ENCODE measurements at regions of chr2 and their contacts with region 1.

Region 1: GRCh38 chr2:155519529-155520130 is 812.9 kb downstream of the NR4A2 start:
- DNase-seq: no peak
- ATAC-seq: no peak
- H3K4me3 ChIP-seq: no peak overlapping the region
- H3K27ac ChIP-seq: no peak overlapping the region
- H3K4me1 ChIP-seq: no peaks in the 10 kb centered on the region
- H3K27me3 ChIP-seq: no peaks in the 10 kb centered on the region; a peak in 1 of 5 replicates
- CTCF ChIP-seq: no peak
- EP300 ChIP-seq: no peak
- POLR2A ChIP-seq: no peak
- RAD21 ChIP-seq: no peak

Region 2: DNA sequence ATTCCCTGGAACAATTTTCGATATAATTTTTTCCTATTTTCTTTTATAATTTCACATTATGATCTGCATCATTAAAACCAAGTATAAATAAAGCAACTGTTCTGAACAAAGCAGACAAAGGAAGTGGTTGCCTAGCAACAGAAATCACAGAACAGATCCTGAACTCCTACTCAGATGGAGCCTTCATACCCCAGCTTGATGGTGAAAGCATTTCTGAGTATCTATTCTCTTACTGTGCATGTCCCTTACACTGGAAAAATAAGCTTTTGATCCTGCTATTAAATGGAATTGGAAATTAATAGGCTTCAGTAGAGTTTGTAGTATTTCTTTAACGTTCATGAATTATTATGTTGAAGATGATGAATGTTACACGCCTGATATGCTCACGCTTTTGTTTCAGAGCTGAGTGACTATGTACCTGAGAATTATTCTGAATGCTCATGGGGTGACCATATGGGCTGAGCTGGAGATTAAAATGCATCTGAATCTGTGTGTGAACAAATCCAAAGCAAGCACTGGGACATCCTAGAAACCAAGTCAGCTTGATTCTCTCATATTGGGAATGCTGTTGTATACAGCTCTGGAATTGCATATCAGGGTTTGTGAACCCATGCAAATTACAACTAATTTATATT is 567.2 kb before region 1 on chr2:
- CTCF ChIA-PET with region 1: no interaction called
- POLR2A ChIA-PET with region 1: no interaction called
- in situ Hi-C with region 1: no loop called
- intact Hi-C with region 1: loop called (anchors 5 kb)
- DNase-seq: no peak
- ATAC-seq: no peak
- H3K4me3 ChIP-seq: no peak overlapping the region
- H3K27ac ChIP-seq: no peak overlapping the region
- H3K4me1 ChIP-seq: no peaks in the 10 kb centered on the region
- H3K27me3 ChIP-seq: no peaks in the 10 kb centered on the region
- CTCF ChIP-seq: no peak
- EP300 ChIP-seq: no peak
- POLR2A ChIP-seq: no peak
- RAD21 ChIP-seq: no peak